AG04449 (cell line): ENCODE measurements at regions of chr19 and their contacts with region 1.

Region 1: DNA sequence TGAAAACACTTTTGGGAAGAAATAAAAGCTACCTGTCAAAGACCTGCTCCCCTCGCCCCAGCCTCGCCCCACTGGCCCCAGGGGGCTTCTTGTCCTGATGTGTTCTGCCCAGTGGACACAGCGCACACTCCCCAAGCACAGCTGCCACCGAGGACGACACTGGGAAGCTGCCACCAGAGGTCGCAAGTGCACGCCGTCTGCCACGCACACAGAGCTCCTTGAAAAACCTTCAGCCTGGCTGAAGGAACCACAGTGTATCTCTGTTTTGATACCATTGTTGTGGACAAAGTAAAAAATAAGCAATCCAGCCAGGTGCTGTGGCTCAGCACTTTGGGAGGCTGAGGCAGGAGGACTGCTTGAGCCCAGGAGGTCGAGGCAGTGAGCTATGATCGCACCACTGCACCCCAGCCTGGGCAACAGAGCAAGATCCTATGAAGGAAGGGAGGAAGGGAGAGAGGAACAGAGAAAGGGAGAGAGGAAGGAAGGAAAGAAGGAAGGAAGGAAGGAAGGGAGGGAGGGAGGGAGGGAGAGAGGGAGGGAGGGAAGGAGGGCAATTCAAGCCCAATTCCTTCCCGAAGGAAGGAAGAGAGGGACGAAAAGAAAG is 57.3 kb downstream of the CEBPG start:
- DNase-seq: no peak
- H3K4me3 ChIP-seq: no peak overlapping the region
- CTCF ChIP-seq: peak; percentile 97

Region 2: DNA sequence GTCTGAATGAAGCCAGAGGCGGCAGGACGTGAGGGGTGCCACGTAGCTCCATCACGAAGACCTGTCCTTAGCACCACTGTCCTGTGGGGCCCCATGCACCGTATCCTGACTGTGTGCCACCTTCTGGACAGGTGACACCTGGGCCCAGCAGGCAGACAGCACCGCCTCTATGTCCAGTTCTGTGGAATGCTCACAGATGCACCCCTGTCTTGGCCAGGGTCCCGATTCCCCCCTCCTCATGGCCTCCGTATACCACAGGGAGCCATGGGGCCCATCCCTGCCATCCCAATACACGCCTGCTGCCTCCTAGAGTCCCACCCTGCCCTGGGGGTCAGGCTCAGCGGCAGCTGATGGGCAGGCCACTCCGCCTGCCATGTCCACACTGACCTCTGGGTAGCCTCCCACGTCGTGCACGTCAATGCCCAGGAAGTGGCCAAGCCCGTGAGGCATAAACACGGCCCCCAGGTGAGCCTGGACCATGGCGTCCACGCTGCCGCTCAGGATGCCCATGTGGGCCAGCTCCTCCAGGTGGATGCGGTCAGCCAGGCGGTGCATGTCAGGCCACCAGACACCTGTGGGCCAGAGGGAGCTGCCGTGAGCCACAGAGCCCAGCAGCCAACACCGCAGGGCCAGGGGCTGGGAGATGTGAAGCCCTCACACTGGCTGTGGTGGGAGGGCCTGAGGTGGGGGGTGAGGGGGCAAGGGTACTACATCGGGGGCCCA is 39.7 kb before region 1 on chr19:
- CTCF ChIA-PET with region 1: no interaction called
- POLR2A ChIA-PET with region 1: no interaction called
- DNase-seq: no peak
- H3K4me3 ChIP-seq: no peak overlapping the region
- CTCF ChIP-seq: no peak

Region 3: DNA sequence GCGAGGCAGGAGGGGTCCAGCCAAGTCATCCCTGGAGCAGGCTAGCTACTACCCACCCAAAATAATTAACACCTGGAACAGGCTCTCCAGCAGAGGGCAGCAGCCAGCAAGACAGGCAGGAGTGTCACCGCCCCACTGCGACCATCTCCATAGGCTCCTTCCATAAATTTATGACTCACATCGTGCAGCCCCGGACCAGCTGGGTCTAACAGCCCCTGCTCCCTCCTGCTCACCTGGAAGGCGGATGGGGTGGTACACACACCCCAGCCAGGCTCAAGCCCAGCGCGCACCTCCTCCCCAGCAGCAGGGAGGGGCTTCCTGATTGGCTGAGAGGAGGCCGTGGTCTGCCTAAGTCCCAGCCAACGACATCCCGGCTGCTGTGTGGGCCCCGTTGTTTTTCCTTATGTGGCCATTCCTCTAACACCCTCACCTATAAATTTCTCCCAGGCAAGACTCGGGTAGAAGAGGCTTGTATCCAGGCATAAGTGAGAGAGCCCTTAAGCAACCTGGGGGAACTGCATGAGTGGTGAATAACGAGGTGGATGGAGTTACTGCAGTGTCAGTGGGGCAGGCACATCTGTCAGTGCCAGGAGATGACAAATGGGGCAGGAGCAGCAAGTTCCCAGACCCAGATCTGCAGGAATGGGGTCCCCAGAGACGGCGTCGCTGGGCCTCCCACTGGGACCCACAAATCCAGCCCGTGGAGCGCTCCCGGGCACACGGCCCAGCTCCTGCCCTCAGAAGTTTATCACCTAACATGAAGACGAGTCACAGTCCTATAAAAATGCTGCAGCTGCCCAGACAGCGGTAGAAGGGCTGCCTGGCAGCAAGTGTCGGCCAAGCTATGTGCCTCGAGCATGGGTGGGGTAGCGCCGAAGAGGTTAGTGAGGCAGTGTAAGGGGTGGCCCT is 14.2 kb before region 1 on chr19:
- CTCF ChIA-PET with region 1: interaction called, 40 read pairs
- POLR2A ChIA-PET with region 1: no interaction called
- DNase-seq: no peak
- H3K4me3 ChIP-seq: peak overlapping the region; percentile 12; the same call in 1 of the 2 replicates
- CTCF ChIP-seq: peak; percentile 74

Region 4: GRCh38 chr19:33447336-33448158 is 16.8 kb after region 1 on chr19:
- CTCF ChIA-PET with region 1: interaction called, 10 read pairs
- POLR2A ChIA-PET with region 1: no interaction called
- DNase-seq: no peak
- H3K4me3 ChIP-seq: no peak overlapping the region
- CTCF ChIP-seq: no peak